ENCODE measurements at regions of chr17 and their contacts with region 1.

Region 1: GRCh38 chr17:52846325-52846724 is 687.8 kb upstream of the CA10 start:
- DNase-seq: peak in 1 of 2 donors; percentile 12
- ATAC-seq: peak in 1 of 2 donors; percentile 47
- H3K4me3 ChIP-seq: no peak overlapping the region
- H3K27ac ChIP-seq: peak overlapping the region; percentile 26 to 51 (median 36)
- H3K4me1 ChIP-seq: peaks cover 6 to 9% of the 10 kb centered on the region in 2 donors
- H3K27me3 ChIP-seq: no peaks in the 10 kb centered on the region
- CTCF ChIP-seq: no peak
- POLR2A ChIP-seq: no peak

Region 2: DNA sequence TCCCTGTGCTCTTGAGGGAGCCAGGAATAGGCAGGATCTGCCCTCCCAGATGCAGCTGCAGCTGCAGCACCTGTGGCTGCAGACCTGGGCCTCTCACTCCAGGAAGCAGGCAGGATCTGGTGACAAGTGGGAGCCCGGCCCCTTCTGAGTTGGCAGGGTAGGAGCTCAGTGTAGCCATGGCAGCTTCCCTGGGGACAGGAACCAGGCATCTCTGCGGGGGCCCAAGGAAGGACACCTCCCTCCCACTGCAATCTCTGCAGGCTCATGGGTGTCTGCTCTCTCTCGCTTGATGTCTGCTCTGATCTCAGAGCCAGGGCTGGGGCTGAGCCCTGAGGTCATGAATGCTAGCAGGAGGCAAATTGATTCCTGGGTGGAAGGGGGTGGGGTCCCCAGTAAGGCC is 95.3 kb before region 1 on chr17:
- in situ Hi-C with region 1: loop called in 1 of 4 experiments (anchors 25 kb)
- intact Hi-C with region 1: no loop called
- DNase-seq: no peak
- ATAC-seq: no peak
- H3K4me3 ChIP-seq: no peak overlapping the region
- H3K27ac ChIP-seq: no peak overlapping the region
- H3K4me1 ChIP-seq: no peaks in the 10 kb centered on the region
- H3K27me3 ChIP-seq: no peaks in the 10 kb centered on the region
- CTCF ChIP-seq: no peak
- POLR2A ChIP-seq: no peak

Region 3: GRCh38 chr17:52892334-52892733 is 46.0 kb after region 1 on chr17:
- in situ Hi-C with region 1: no loop called
- intact Hi-C with region 1: no loop called
- DNase-seq: no peak
- ATAC-seq: no peak
- H3K4me3 ChIP-seq: no peak overlapping the region
- H3K27ac ChIP-seq: no peak overlapping the region
- H3K4me1 ChIP-seq: no peaks in the 10 kb centered on the region
- H3K27me3 ChIP-seq: no peaks in the 10 kb centered on the region
- CTCF ChIP-seq: no peak
- POLR2A ChIP-seq: no peak

Region 4: DNA sequence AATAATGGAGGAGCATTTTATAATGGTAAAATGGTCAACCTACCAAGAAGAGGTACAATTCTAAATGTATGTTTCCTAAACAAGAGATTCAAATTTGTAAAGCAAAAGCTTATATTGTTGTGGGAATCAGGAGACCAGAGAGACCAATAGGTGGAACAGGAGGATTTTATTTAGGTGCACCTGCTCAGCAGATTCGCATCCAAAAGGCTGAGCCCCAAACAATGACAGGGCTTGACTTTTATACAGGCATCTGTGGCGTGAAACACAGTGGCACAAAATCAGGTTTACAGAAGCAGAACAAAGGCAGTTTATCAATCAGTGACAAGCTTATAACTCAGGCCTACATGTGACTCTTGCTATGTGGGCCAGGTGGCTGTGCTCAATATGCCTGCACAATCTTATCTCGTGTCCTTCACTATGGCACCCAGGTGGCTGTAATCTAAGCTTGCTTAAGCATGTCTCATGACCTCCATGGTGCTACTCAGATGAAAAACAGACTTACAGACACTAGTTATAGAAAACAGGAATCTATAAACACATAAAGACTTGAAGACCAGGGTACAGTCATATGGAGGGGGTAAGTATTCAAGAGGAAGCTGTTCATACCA is 92.4 kb after region 1 on chr17:
- in situ Hi-C with region 1: no loop called
- intact Hi-C with region 1: no loop called
- DNase-seq: no peak
- ATAC-seq: no peak
- H3K4me3 ChIP-seq: no peak overlapping the region
- H3K27ac ChIP-seq: no peak overlapping the region
- H3K4me1 ChIP-seq: no peaks in the 10 kb centered on the region
- H3K27me3 ChIP-seq: no peaks in the 10 kb centered on the region
- CTCF ChIP-seq: no peak
- POLR2A ChIP-seq: no peak

Region 5: DNA sequence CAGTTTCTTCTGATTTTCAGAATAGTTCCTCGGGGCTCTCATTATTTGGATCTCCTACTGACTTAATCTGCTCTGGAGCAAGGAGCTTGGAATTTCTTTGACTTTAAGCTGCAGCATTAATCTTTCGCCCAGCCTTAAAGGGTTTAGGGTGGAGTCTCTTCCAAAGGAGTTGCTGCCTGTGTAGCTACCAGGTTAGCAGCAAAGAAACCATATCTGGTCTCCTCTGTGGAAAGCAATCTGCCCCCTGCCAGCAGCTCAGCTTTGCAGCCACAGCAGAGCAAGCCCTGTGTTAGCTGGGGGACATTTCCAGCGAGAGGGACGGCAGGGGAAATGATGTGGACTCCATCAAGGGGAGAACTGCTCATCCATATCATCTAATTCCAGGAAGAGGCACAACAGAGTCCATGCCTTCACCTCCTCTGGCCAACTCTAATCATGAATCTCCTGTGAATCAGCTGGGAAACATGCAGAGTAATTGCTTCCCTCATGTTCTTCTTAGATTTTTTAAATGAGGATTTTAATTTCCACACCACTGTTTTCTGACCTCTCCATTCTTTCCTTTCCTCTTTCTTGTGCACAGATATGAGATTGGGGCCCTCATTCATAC is 139.8 kb after region 1 on chr17:
- in situ Hi-C with region 1: no loop called
- intact Hi-C with region 1: no loop called
- DNase-seq: no peak
- ATAC-seq: no peak
- H3K4me3 ChIP-seq: no peak overlapping the region
- H3K27ac ChIP-seq: no peak overlapping the region
- H3K4me1 ChIP-seq: no peaks in the 10 kb centered on the region
- H3K27me3 ChIP-seq: no peaks in the 10 kb centered on the region
- CTCF ChIP-seq: no peak
- POLR2A ChIP-seq: no peak

Measured in gastrocnemius medialis (tissue), 4 donors.